Colonic mucosa (tissue), 4 donors: ENCODE measurements at regions of chr5 and their contacts with region 1.

Region 1: GRCh38 chr5:54517174-54518092 is at the start of gene SNX18:
- DNase-seq: peak; percentile 89
- H3K4me3 ChIP-seq: peak within 1 kb of the TSS; percentile 97
- H3K27ac ChIP-seq: peak within 1 kb of the TSS; percentile 92
- H3K4me1 ChIP-seq: no peaks in the 10 kb centered on the region
- H3K27me3 ChIP-seq: no peaks in the 10 kb centered on the region
- CTCF ChIP-seq: peak; percentile 92
- total RNA-seq, gene SNX18: 13.4 to 14.4 TPM

Region 2: GRCh38 chr5:54357408-54358058 is 159.9 kb before region 1 on chr5:
- intact Hi-C with region 1: no loop called
- DNase-seq: no peak
- H3K4me3 ChIP-seq: no peak overlapping the region
- H3K27ac ChIP-seq: no peak overlapping the region
- H3K4me1 ChIP-seq: no peaks in the 10 kb centered on the region
- H3K27me3 ChIP-seq: no peaks in the 10 kb centered on the region
- CTCF ChIP-seq: no peak

Region 3: GRCh38 chr5:54758038-54758437 is 240.6 kb after region 1 on chr5:
- intact Hi-C with region 1: loop called (anchors 5 kb)
- DNase-seq: no peak
- H3K4me3 ChIP-seq: no peak overlapping the region
- H3K27ac ChIP-seq: no peak overlapping the region
- H3K4me1 ChIP-seq: no peaks in the 10 kb centered on the region
- H3K27me3 ChIP-seq: no peaks in the 10 kb centered on the region
- CTCF ChIP-seq: no peak

Region 4: GRCh38 chr5:54844905-54845566 is 327.6 kb after region 1 on chr5:
- intact Hi-C with region 1: loop called (anchors 2 kb)
- DNase-seq: no peak
- H3K4me3 ChIP-seq: no peak overlapping the region
- H3K27ac ChIP-seq: no peak overlapping the region
- H3K4me1 ChIP-seq: no peaks in the 10 kb centered on the region
- H3K27me3 ChIP-seq: no peaks in the 10 kb centered on the region
- CTCF ChIP-seq: peak; percentile 62

Region 5: DNA sequence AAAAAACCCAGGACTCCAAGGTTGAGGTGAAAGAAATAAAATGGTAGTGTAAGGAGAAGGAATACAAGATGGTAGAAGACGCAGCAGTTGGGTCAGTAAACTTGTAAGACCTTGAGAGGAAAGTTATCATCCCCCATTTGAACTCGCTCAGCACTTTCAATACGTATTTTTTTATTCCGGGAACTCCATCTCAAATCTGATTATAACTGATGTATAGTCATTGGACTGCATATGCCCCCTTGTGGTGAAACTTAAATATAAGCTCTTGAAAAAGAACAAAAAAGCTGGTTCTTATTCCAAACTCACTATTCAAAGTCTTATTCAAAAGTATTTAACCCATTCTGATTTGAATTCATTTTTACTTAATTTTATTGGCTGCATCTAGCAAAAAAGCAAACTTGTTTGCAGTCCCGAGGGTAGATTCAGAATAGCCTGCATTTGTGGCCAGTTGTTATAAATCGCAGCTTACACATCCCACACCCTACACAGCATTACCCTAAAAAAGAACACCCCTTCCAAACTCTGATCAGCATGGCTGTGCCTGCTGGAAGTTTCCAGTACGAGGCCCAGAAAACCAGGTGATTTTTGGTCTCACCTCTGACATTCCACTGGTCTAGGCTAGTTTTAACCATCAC is 350.0 kb after region 1 on chr5:
- intact Hi-C with region 1: loop called (anchors 5 kb)
- DNase-seq: no peak
- H3K4me3 ChIP-seq: no peak overlapping the region
- H3K27ac ChIP-seq: no peak overlapping the region
- H3K4me1 ChIP-seq: no peaks in the 10 kb centered on the region
- H3K27me3 ChIP-seq: no peaks in the 10 kb centered on the region
- CTCF ChIP-seq: peak; percentile 60

Region 6: GRCh38 chr5:55146543-55147151 is 629.2 kb after region 1 on chr5:
- intact Hi-C with region 1: loop called (anchors 10 kb)
- DNase-seq: peak; percentile 82
- H3K4me3 ChIP-seq: no peak overlapping the region
- H3K27ac ChIP-seq: no peak overlapping the region
- H3K4me1 ChIP-seq: no peaks in the 10 kb centered on the region
- H3K27me3 ChIP-seq: no peaks in the 10 kb centered on the region
- CTCF ChIP-seq: peak; percentile 90